Lower leg skin (tissue), 4 donors: ENCODE measurements at regions of chr20 and their contacts with region 1.

Region 1: GRCh38 chr20:19205977-19206396 is 6.5 kb upstream of the SLC24A3 start:
- DNase-seq: peak; percentile 65 to 96
- H3K4me3 ChIP-seq: no peak overlapping the region
- CTCF ChIP-seq: peak in 1 of 3 donors; percentile 40
- POLR2A ChIP-seq: no peak

Region 2: GRCh38 chr20:18904624-18905023 is 301.4 kb before region 1 on chr20:
- intact Hi-C with region 1: loop called (anchors 10 kb)
- DNase-seq: no peak
- H3K4me3 ChIP-seq: no peak overlapping the region
- CTCF ChIP-seq: no peak
- POLR2A ChIP-seq: no peak

Region 3: GRCh38 chr20:19583532-19584175 is 377.7 kb after region 1 on chr20:
- intact Hi-C with region 1: loop called (anchors 10 kb)
- DNase-seq: peak; percentile 55 to 94
- H3K4me3 ChIP-seq: no peak overlapping the region
- CTCF ChIP-seq: no peak
- POLR2A ChIP-seq: no peak

Region 4: GRCh38 chr20:19652591-19653026 is 446.6 kb after region 1 on chr20:
- intact Hi-C with region 1: loop called (anchors 5 kb)
- DNase-seq: no peak
- H3K4me3 ChIP-seq: no peak overlapping the region
- CTCF ChIP-seq: no peak
- POLR2A ChIP-seq: no peak